GM12878 (cell line): ENCODE measurements at regions of chr13 and their contacts with region 1.

Region 1: DNA sequence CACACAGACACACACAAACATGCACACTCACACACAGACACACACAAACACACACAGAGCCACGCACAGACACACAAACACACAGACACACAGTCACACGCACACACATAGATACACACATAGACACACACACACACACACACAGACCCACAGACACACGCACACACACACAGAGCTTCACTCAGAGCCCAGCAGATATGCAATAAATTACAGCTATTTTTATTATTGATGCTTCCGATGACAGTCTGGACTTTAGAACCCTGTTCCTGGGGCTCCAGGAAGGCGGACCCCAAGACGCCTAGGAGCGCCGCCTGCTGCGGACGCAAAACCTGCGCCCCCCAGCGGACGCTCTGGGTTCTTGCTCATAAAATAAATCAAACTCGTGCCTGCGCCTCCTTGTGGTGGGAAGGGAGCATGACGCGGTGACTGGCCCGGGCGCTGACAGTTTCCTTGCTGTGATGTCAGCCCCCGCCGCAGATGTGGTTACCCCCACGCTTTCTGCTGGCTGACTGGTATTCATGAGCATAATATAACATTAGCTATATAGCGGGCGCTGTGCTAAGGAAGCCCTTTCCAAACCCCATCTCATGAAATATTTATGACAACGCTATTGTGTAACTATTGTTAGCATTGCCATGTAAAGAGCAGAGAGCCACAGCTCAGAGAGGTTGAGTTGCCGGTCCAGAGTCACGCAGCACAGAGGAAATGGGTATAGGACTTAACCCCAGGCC is 64.4 kb upstream of the TM9SF2 start:
- DNase-seq: no peak
- ATAC-seq: peak; percentile 51
- H3K4me3 ChIP-seq: no peak overlapping the region
- H3K27ac ChIP-seq: peak overlapping the region; percentile 65
- H3K4me1 ChIP-seq: peaks cover 50% of the 10 kb centered on the region
- H3K27me3 ChIP-seq: peaks cover 2 to 4% of the 10 kb centered on the region in 2 experiments; a peak in 2 of 4 replicates
- CTCF ChIP-seq: peak; percentile 100; a peak in 5 of 6 replicates
- EP300 ChIP-seq: peak; percentile 35 to 51; a peak in 2 of 4 replicates
- POLR2A ChIP-seq: no peak
- RAD21 ChIP-seq: peak; percentile 97

Region 2: GRCh38 chr13:99176309-99177276 is 260.3 kb before region 1 on chr13:
- CTCF ChIA-PET with region 1: interaction called, 14 read pairs
- POLR2A ChIA-PET with region 1: no interaction called
- RAD21 ChIA-PET with region 1: interaction called, 12 read pairs
- SMC1A ChIA-PET with region 1: interaction called, 8 read pairs
- in situ Hi-C with region 1: loop called (anchors 5 kb)
- intact Hi-C with region 1: loop called (anchors 2 kb)
- DNase-seq: no peak
- ATAC-seq: peak; percentile 96
- H3K4me3 ChIP-seq: no peak overlapping the region
- H3K27ac ChIP-seq: no peak overlapping the region
- H3K4me1 ChIP-seq: peaks cover 4% of the 10 kb centered on the region
- H3K27me3 ChIP-seq: peaks cover 0 to 2% of the 10 kb centered on the region in 2 experiments; a peak in 1 of 4 replicates
- CTCF ChIP-seq: peak; percentile 84 to 96 (median 93)
- EP300 ChIP-seq: no peak
- POLR2A ChIP-seq: no peak
- RAD21 ChIP-seq: peak; percentile 99

Region 3: DNA sequence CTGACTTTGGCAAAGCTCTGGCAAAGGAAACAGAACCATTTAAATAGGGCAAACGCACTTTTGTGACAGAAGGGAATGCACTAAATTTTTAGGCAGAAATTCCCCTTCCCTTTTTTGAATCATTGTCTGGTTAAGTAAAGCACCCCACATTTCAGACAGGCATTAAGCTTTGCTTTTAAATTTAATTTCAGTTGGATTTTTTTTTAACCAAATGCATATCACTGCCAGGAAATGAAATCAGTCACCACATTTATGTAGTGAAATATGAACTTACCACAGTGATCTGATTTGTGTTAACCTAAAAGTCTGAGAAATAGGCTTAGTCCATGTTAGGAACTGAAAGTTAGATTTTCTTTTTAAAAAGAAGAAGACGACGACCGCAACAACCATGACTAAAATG is 140.5 kb before region 1 on chr13:
- CTCF ChIA-PET with region 1: interaction called, 15 read pairs
- POLR2A ChIA-PET with region 1: interaction called, 3 read pairs
- RAD21 ChIA-PET with region 1: interaction called, 26 read pairs
- SMC1A ChIA-PET with region 1: interaction called, 29 read pairs
- in situ Hi-C with region 1: no loop called
- intact Hi-C with region 1: no loop called
- DNase-seq: no peak
- ATAC-seq: peak; percentile 15
- H3K4me3 ChIP-seq: peak overlapping the region; percentile 58; the same call in 1 of the 2 replicates
- H3K27ac ChIP-seq: peak overlapping the region; percentile 62
- H3K4me1 ChIP-seq: peaks cover 14% of the 10 kb centered on the region
- H3K27me3 ChIP-seq: no peaks in the 10 kb centered on the region
- CTCF ChIP-seq: no peak
- EP300 ChIP-seq: no peak
- POLR2A ChIP-seq: no peak
- RAD21 ChIP-seq: peak; percentile 2; the same call in 1 of the 2 replicates

Region 4: GRCh38 chr13:99331881-99332293 is 105.0 kb before region 1 on chr13:
- CTCF ChIA-PET with region 1: interaction called, 13 read pairs
- POLR2A ChIA-PET with region 1: no interaction called
- RAD21 ChIA-PET with region 1: interaction called, 4 read pairs
- SMC1A ChIA-PET with region 1: interaction called, 9 read pairs
- in situ Hi-C with region 1: no loop called
- intact Hi-C with region 1: no loop called
- DNase-seq: peak; percentile 79
- ATAC-seq: peak; percentile 89
- H3K4me3 ChIP-seq: no peak overlapping the region
- H3K27ac ChIP-seq: peak overlapping the region; percentile 66; the same call in 1 of the 2 replicates
- H3K4me1 ChIP-seq: peaks cover 21% of the 10 kb centered on the region
- H3K27me3 ChIP-seq: no peaks in the 10 kb centered on the region
- CTCF ChIP-seq: no peak
- EP300 ChIP-seq: peak; percentile 39 to 52; a peak in 2 of 4 replicates
- POLR2A ChIP-seq: no peak
- RAD21 ChIP-seq: no peak

Region 5: GRCh38 chr13:99374994-99375737 is 61.7 kb before region 1 on chr13:
- CTCF ChIA-PET with region 1: interaction called, 577 read pairs
- POLR2A ChIA-PET with region 1: interaction called, 5 read pairs
- RAD21 ChIA-PET with region 1: interaction called, 19 read pairs
- SMC1A ChIA-PET with region 1: interaction called, 265 read pairs
- in situ Hi-C with region 1: no loop called
- intact Hi-C with region 1: loop called (anchors 2 kb)
- DNase-seq: no peak
- ATAC-seq: peak; percentile 83
- H3K4me3 ChIP-seq: peak overlapping the region; percentile 33; the same call in 1 of the 2 replicates
- H3K27ac ChIP-seq: peak overlapping the region; percentile 94
- H3K4me1 ChIP-seq: peaks cover 66% of the 10 kb centered on the region
- H3K27me3 ChIP-seq: no peaks in the 10 kb centered on the region
- CTCF ChIP-seq: 0 out of 6 replicates have a peak, but pooled peaks of 1 of the 3 experiments have one; percentile 0
- EP300 ChIP-seq: peak; percentile 85 to 91; a peak in 3 of 4 replicates
- POLR2A ChIP-seq: 0 out of 2 replicates have a peak, but pooled peaks have one; percentile 24
- RAD21 ChIP-seq: no peak

Region 6: GRCh38 chr13:99392470-99393135 is 44.2 kb before region 1 on chr13:
- CTCF ChIA-PET with region 1: interaction called, 577 read pairs
- POLR2A ChIA-PET with region 1: interaction called, 26 read pairs
- RAD21 ChIA-PET with region 1: interaction called, 168 read pairs
- SMC1A ChIA-PET with region 1: interaction called, 265 read pairs
- in situ Hi-C with region 1: loop called (anchors 5 kb)
- intact Hi-C with region 1: loop called (anchors 1 kb)
- DNase-seq: no peak
- ATAC-seq: no peak
- H3K4me3 ChIP-seq: no peak overlapping the region
- H3K27ac ChIP-seq: no peak overlapping the region
- H3K4me1 ChIP-seq: peaks cover 9% of the 10 kb centered on the region
- H3K27me3 ChIP-seq: no peaks in the 10 kb centered on the region
- CTCF ChIP-seq: no peak
- EP300 ChIP-seq: no peak
- POLR2A ChIP-seq: no peak
- RAD21 ChIP-seq: no peak

Region 7: GRCh38 chr13:99425485-99426341 is 11.1 kb before region 1 on chr13:
- CTCF ChIA-PET with region 1: interaction called, 65 read pairs
- POLR2A ChIA-PET with region 1: interaction called, 7 read pairs
- RAD21 ChIA-PET with region 1: interaction called, 43 read pairs
- SMC1A ChIA-PET with region 1: interaction called, 111 read pairs
- in situ Hi-C with region 1: no loop called
- intact Hi-C with region 1: loop called (anchors 1 kb)
- DNase-seq: peak; percentile 90
- ATAC-seq: peak; percentile 71
- H3K4me3 ChIP-seq: peak overlapping the region; percentile 10
- H3K27ac ChIP-seq: peak overlapping the region; percentile 100
- H3K4me1 ChIP-seq: peaks cover 62% of the 10 kb centered on the region
- H3K27me3 ChIP-seq: no peaks in the 10 kb centered on the region
- CTCF ChIP-seq: no peak
- EP300 ChIP-seq: peak; percentile 55 to 89; a peak in 3 of 4 replicates
- POLR2A ChIP-seq: no peak
- RAD21 ChIP-seq: peak; percentile 18; the same call in 1 of the 2 replicates

Region 8: DNA sequence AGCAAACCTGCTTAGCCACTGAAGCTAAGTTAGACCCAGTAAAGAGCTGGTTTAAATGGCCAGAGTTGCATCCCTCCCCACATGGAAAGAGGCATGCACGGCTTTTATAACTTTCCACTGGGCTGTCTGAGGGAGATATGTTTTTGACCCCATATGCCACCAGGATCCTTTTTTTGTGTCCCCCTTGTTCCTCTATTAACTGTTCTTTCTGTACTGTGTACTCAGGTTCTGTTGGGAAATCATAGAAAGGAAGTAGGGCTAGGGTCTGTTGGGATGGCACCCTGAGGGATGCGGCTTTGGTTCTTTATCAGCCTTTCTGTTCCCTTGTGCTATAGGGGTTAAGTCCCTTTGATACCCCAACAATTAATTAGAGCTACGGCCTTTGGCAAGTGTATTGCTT is 52.2 kb after region 1 on chr13:
- CTCF ChIA-PET with region 1: no interaction called
- POLR2A ChIA-PET with region 1: no interaction called
- RAD21 ChIA-PET with region 1: no interaction called
- SMC1A ChIA-PET with region 1: no interaction called
- in situ Hi-C with region 1: no loop called
- intact Hi-C with region 1: no loop called
- DNase-seq: no peak
- ATAC-seq: no peak
- H3K4me3 ChIP-seq: no peak overlapping the region
- H3K27ac ChIP-seq: no peak overlapping the region
- H3K4me1 ChIP-seq: no peaks in the 10 kb centered on the region
- H3K27me3 ChIP-seq: no peaks in the 10 kb centered on the region; a peak in 1 of 4 replicates
- CTCF ChIP-seq: no peak
- EP300 ChIP-seq: no peak
- POLR2A ChIP-seq: no peak
- RAD21 ChIP-seq: no peak

Region 9: DNA sequence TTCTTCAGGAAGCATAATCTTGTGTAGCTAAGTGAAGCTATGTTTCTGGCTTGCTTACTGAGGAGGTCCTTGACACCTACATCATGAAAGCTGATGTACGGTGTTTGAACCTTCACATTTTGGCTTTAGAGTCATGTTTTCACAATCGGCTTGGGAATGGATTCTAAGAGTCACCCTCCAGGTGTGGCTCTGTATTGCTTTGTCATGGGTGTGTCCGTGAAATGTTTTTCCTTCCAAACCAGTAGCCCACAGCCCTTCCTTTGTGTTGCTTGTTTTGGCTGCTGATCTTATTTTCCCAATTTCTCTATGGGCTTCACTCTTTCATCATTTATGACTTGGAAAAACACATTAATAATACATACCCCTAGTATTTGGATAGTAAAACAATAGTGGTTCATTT is 911.1 kb after region 1 on chr13:
- CTCF ChIA-PET with region 1: no interaction called
- POLR2A ChIA-PET with region 1: no interaction called
- RAD21 ChIA-PET with region 1: no interaction called
- SMC1A ChIA-PET with region 1: no interaction called
- in situ Hi-C with region 1: no loop called
- intact Hi-C with region 1: no loop called
- DNase-seq: no peak
- ATAC-seq: no peak
- H3K4me3 ChIP-seq: no peak overlapping the region
- H3K27ac ChIP-seq: no peak overlapping the region
- H3K4me1 ChIP-seq: no peaks in the 10 kb centered on the region
- H3K27me3 ChIP-seq: no peaks in the 10 kb centered on the region
- CTCF ChIP-seq: no peak
- EP300 ChIP-seq: no peak
- POLR2A ChIP-seq: no peak
- RAD21 ChIP-seq: no peak